ENCODE measurements at regions of chr6 and their contacts with region 1.

Region 1: DNA sequence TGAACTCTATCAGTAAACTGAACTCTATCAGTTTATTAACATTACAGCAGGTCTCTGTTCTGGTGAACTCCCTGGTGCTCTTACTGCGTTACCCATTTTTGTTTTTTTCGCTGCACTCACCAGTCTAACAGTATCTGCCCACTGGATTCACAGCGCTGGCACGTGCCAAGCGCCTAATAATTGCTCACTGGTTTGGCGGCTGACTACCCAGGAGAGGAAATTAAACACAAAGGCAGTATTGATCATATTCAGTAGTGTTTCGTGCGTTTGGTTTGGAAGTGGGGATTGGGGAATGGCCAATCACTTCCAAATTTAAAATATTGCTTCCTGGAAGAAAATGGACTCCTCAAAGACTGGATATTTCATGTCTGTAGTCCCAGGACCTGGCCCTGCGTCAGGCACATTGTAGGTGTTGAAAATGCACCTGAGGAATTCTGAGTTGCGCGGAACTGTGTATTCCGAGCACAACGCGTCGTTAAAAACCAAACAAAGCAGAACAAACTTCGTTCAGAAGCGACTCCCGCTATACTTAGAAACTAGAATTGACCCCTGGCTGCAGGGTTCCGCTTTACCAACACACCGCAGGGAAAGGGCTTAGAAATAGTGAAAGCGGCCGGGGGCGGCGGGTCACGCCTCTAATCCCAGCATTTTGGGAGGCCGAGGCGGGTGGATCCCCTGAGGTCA is 1.1 kb upstream of the RPS12 start:
- DNase-seq: peak; percentile 34
- ATAC-seq: peak; percentile 28
- H3K4me3 ChIP-seq: peak overlapping the region; percentile 92
- H3K27ac ChIP-seq: peak overlapping the region; percentile 66
- H3K4me1 ChIP-seq: peaks cover 21% of the 10 kb centered on the region
- H3K27me3 ChIP-seq: no peaks in the 10 kb centered on the region
- CTCF ChIP-seq: no peak

Region 2: DNA sequence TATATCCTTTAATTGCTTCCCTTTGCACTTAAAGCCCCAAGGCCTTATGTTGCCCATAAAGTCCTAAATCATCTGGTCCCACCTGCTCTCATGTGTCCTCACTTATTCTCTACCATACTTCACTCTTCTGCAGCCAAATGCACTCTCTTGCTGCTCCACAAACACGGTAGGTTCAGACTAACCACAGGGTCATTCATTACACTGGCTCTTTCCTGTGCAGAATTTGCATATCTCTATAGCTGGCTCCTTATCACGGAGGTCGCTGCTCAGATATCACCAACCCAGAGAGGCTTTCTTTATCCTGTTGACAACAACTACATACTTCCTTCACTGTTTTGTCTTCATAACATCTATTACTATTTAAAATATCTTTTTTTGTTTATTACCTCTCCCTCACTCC is 498.9 kb before region 1 on chr6:
- CTCF ChIA-PET with region 1: no interaction called
- POLR2A ChIA-PET with region 1: no interaction called
- intact Hi-C with region 1: no loop called
- DNase-seq: no peak
- ATAC-seq: no peak
- H3K4me3 ChIP-seq: no peak overlapping the region
- H3K27ac ChIP-seq: no peak overlapping the region
- H3K4me1 ChIP-seq: no peaks in the 10 kb centered on the region
- H3K27me3 ChIP-seq: no peaks in the 10 kb centered on the region
- CTCF ChIP-seq: no peak

Region 3: GRCh38 chr6:132708776-132709175 is 104.5 kb before region 1 on chr6:
- CTCF ChIA-PET with region 1: no interaction called
- POLR2A ChIA-PET with region 1: no interaction called
- intact Hi-C with region 1: no loop called
- DNase-seq: no peak
- ATAC-seq: no peak
- H3K4me3 ChIP-seq: no peak overlapping the region
- H3K27ac ChIP-seq: no peak overlapping the region
- H3K4me1 ChIP-seq: 0 out of 2 replicates have a peak, but pooled peaks cover 8% of the 10 kb centered on the region
- H3K27me3 ChIP-seq: no peaks in the 10 kb centered on the region
- CTCF ChIP-seq: no peak

Region 4: DNA sequence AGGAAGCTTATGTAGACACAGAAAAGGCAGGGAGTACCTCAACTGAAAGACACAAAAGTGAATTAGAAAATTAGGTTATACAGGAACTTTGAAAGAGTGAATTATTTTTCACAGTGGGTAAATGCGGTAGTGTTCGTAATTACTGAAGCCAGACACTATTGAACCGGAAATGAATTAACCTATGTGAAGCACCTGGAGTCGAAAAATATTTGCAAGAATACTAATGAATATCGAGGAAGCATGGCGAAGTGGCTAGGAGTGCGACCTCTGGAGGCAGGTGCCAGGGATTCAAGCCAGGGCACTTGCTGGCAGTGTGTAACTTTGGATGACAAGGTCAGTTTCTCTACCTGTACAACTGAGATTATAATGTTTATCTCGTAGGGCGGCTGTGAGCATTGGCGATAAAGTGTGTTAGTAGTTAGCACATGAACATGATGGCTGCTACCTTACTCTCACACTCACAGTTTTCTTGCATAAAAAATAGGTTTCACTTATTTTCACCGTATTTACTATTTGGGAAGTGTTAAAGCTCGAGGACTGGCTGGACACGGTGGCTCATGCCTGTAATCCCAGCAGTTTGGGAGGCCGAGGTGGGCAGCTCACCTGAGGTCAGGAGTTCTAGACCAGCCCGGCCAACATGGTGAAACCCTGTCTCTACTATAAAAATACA is 14.3 kb before region 1 on chr6:
- CTCF ChIA-PET with region 1: interaction called, 10 read pairs
- POLR2A ChIA-PET with region 1: no interaction called
- intact Hi-C with region 1: no loop called
- DNase-seq: peak; percentile 77
- ATAC-seq: peak; percentile 89
- H3K4me3 ChIP-seq: no peak overlapping the region; the same call in 1 of the 2 replicates
- H3K27ac ChIP-seq: 0 out of 2 replicates have a peak overlapping the region, but pooled peaks have one; percentile 14
- H3K4me1 ChIP-seq: no peaks in the 10 kb centered on the region
- H3K27me3 ChIP-seq: no peaks in the 10 kb centered on the region
- CTCF ChIP-seq: peak; percentile 78

Region 5: DNA sequence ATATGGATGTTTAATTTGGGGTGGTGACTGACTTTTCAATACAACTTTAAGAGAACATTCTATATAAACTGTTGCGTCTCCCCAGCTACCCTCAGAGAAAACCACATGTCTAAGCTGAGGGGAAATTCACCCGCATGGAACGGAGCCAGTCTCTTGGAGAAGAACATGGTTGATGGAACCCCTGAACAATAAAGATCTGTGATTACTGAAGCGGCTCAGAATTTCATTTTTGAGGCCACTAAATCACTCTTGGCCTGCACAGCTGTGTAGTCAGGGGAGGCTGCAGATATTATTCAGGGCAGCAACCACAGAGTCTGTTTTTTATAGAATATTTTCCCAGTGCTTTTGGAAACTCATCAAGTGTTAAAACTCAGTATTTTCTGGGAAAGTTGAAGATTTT is 501.6 kb after region 1 on chr6:
- CTCF ChIA-PET with region 1: no interaction called
- POLR2A ChIA-PET with region 1: no interaction called
- intact Hi-C with region 1: no loop called
- DNase-seq: no peak
- ATAC-seq: no peak
- H3K4me3 ChIP-seq: no peak overlapping the region
- H3K27ac ChIP-seq: no peak overlapping the region
- H3K4me1 ChIP-seq: no peaks in the 10 kb centered on the region
- H3K27me3 ChIP-seq: no peaks in the 10 kb centered on the region
- CTCF ChIP-seq: no peak

Region 6: GRCh38 chr6:133871131-133871530 is 1057.8 kb after region 1 on chr6:
- CTCF ChIA-PET with region 1: no interaction called
- POLR2A ChIA-PET with region 1: interaction called, 17 read pairs
- intact Hi-C with region 1: no loop called
- DNase-seq: no peak
- ATAC-seq: no peak
- H3K4me3 ChIP-seq: no peak overlapping the region
- H3K27ac ChIP-seq: no peak overlapping the region
- H3K4me1 ChIP-seq: no peaks in the 10 kb centered on the region
- H3K27me3 ChIP-seq: peaks cover 7% of the 10 kb centered on the region; the same call in 1 of the 2 replicates
- CTCF ChIP-seq: no peak

Measured in PC-3 (cell line).